Esophagus muscularis mucosa (tissue), 4 donors: ENCODE measurements at regions of chr2 and their contacts with region 1.

Region 1: DNA sequence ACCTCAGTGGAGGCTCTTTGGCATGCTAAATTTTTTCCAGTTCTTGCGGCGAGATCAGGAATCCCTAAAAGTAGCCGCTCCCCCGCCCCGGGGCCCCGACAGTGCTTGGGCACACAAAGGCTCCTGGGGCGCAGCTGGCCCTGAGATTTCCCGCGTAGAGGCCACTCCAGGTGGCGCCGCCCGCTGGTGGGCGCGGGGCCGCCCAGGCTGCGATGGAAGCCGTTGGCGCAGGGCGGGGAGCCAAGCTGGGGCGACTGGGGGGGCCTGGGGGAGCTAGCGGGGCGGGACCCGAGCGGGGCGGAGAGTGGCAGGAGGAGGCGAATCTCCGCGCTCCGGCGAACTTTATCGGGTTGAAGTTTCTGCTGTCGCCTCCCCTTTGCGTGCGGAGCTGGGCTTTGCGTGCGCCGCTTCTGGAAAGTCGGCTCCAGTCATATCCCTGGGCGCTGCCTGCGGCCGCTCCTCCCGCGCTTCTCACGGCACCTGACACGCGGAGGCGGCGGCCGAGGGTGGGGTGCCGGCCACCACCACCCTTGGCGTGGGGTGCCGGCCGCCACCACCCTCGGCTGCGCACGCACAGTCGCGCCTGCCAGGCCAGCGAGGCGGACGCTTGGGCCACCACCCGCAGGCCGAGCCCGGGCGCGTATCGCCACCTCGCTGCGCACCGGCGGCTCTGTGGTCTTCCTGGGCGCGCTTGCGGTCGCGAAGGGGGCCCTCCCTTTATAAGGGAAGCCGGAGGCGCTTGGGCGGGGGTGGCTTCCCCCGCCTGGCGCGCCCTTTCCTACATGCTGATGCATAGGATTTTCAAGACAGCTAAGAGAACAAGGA is 867 bp upstream of the CYP1B1 start:
- DNase-seq: no peak
- H3K4me3 ChIP-seq: peak overlapping the region; percentile 59 to 70 (median 63)
- H3K27ac ChIP-seq: peak overlapping the region; percentile 74 to 88 (median 82)
- H3K4me1 ChIP-seq: peaks cover 36 to 48% (median 44%) of the 10 kb centered on the region in 4 donors
- H3K27me3 ChIP-seq: peaks cover 0 to 48% (median 15%) of the 10 kb centered on the region in 4 donors
- CTCF ChIP-seq: peak in 1 of 3 experiments; percentile 22
- EP300 ChIP-seq: no peak
- POLR2A ChIP-seq: peak; percentile 8

Region 2: GRCh38 chr2:38095996-38096861 is 19.4 kb after region 1 on chr2:
- intact Hi-C with region 1: no loop called
- DNase-seq: no peak
- H3K4me3 ChIP-seq: no peak overlapping the region
- H3K27ac ChIP-seq: peak overlapping the region; percentile 7 to 38 (median 13)
- H3K4me1 ChIP-seq: peaks cover 40 to 49% (median 42%) of the 10 kb centered on the region in 4 donors
- H3K27me3 ChIP-seq: no peaks in the 10 kb centered on the region
- CTCF ChIP-seq: no peak
- EP300 ChIP-seq: no peak
- POLR2A ChIP-seq: no peak

Region 3: GRCh38 chr2:38264396-38265281 is 187.8 kb after region 1 on chr2:
- intact Hi-C with region 1: loop called (anchors 5 kb)
- DNase-seq: no peak
- H3K4me3 ChIP-seq: no peak overlapping the region
- H3K27ac ChIP-seq: peak overlapping the region in 1 of 4 donors; percentile 18
- H3K4me1 ChIP-seq: peaks cover 0 to 8% (median 0%) of the 10 kb centered on the region in 4 donors
- H3K27me3 ChIP-seq: no peaks in the 10 kb centered on the region
- CTCF ChIP-seq: no peak
- EP300 ChIP-seq: no peak
- POLR2A ChIP-seq: no peak